HEK293 (cell line): ENCODE measurements at regions of chr2 and their contacts with region 1.

Region 1: DNA sequence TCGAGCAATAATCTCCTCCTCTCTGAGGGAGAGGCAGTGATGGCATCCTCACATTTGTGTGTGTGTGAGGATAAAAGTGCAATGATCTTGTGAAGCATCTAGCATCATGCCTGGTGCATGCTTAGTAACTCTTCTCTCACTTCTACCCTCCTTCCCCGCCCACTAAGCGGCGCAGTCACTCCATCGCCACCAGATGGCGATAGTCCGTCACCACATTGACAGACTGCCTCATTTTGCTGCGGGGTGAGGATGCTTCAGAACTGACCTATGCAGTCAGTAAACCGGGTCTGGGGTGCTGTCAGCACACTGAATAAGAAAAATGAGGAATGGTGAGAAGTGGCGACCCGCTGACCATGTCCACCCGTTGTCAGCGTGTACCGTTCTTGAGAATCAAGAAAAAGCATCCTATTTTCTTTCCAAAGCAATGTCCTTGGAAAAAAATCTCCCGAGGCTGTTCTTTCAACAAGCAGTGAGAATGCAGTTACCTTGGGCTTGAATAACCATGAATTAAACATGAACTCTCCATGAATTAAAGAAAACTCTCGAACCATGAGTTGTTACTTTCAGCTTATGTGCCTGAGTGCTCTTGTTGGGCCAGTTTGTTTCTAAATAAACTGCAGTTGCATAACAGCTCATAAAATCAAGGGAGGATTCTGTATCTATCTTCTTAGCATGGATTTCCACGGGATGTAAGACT is 37.3 kb upstream of the TMEM177 start:
- H3K4me3 ChIP-seq: no peak overlapping the region
- H3K27ac ChIP-seq: no peak overlapping the region
- H3K4me1 ChIP-seq: no peaks in the 10 kb centered on the region
- CTCF ChIP-seq: peak; percentile 91

Region 2: GRCh38 chr2:119592444-119592843 is 49.3 kb before region 1 on chr2:
- CTCF ChIA-PET with region 1: no interaction called
- POLR2A ChIA-PET with region 1: no interaction called
- H3K4me3 ChIP-seq: no peak overlapping the region
- H3K27ac ChIP-seq: no peak overlapping the region
- H3K4me1 ChIP-seq: no peaks in the 10 kb centered on the region
- CTCF ChIP-seq: no peak

Region 3: GRCh38 chr2:119630121-119630520 is 11.6 kb before region 1 on chr2:
- CTCF ChIA-PET with region 1: interaction called, 29 read pairs
- POLR2A ChIA-PET with region 1: no interaction called
- H3K4me3 ChIP-seq: no peak overlapping the region
- H3K27ac ChIP-seq: no peak overlapping the region
- H3K4me1 ChIP-seq: no peaks in the 10 kb centered on the region
- CTCF ChIP-seq: no peak

Region 4: DNA sequence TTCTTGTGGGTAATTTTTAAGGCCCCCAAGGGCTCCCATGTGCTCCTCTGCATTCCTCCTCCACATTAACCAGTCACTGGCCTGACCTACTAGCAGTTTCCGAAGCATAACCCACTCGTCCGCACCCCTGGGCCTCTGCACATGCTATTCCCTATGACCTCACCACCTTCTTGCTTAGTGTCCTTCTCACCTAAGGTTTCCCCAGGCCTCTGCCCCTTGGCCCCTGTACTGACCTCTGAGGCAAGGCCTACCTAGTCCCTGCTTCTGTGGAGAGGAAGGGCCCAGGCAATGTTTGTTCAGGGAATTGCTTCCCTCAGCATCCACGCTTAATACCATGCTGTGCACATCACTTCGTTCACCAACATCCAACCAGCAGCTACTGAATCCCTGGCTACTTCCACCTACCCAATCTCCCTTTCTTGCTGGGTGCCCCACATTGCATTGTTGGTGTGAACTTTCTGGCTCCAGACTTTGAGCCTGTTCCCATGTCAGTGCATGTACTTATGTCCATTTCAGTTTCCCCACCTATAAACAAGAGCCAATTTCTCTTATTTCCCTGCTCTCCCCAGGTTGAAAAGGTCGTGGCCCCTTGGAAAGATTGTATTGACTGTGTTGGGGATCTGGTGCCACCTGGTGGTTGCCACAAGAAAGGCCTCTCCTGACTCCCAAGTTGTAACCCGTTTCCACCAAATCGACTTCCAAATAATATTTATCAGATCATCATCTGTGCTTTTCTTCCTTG is 18.1 kb after region 1 on chr2:
- CTCF ChIA-PET with region 1: interaction called, 39 read pairs
- POLR2A ChIA-PET with region 1: no interaction called
- H3K4me3 ChIP-seq: no peak overlapping the region
- H3K27ac ChIP-seq: no peak overlapping the region
- H3K4me1 ChIP-seq: no peaks in the 10 kb centered on the region
- CTCF ChIP-seq: peak; percentile 29